A673 (cell line): ENCODE measurements at regions of chr7 and their contacts with region 1.

Region 1: DNA sequence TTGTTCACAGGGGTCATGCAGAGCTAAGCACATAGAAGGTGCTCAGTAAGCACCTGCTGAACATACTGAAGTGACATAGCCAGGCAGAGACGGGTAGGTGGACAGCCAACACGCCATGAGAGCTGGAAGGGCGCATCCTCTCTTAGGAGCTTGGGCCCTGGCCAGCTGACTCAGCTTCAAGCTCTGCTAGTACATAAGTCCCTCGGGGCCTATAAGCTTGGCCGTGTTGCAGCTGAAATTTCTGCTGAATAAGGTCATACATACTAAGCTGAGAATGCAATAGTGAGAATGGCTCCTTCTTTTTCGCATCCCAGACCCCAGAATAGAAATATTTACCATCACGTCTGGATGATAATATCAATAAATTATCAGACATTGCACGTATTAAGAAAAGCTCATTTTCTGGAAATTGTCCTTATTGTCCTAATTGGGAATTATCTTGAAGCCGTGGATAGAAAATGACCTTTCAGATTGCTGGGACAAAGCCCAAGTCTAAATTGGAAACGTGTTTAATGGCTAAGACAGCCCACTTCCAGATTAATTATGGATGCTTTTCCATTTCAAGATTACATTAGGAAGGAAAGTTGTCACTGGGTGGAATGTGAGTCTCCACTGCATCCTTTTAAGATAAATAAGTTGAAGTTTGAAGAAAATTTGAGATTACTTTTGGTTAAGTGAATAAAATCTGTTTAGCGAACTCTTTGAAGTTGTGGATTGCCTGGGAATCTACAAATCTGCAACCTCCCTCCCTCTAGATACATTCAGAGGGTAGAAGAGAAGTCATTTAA is 287.1 kb upstream of the C7orf33 start:
- DNase-seq: peak; percentile 97
- H3K4me3 ChIP-seq: no peak overlapping the region
- H3K27ac ChIP-seq: peak overlapping the region; percentile 29
- H3K4me1 ChIP-seq: peaks cover 27% of the 10 kb centered on the region
- H3K27me3 ChIP-seq: no peaks in the 10 kb centered on the region
- CTCF ChIP-seq: no peak

Region 2: DNA sequence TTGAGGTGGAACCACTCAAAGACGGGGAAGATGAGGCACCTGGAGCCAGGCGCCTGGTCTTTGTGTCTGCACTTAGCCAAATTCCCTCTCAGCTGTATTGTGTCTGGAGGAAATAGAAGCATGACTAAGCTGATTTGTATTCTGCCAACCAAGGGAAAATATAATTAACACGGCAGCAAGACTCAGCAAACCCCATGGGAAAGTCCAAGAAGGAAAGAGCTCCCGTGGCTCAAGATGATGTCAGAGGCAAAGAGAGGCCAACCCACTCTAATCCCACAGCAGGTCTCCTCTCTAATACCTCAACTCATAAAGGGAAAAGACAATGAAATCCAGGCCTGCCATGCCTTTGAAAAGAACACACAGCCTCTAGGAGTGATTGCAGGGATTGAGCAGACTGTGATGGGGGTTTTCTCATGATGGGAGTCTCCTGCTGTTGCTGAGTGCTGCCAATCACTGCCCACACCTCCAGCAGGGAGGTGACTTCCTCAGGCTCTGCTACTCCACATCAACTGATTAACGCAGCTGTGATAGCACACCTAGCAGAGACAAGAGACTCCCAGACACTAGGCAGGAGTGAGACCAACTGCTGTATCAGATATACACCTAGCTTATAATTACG is 31.6 kb after region 1 on chr7:
- CTCF ChIA-PET with region 1: interaction called, 3 read pairs
- POLR2A ChIA-PET with region 1: no interaction called
- intact Hi-C with region 1: loop called (anchors 5 kb)
- DNase-seq: peak; percentile 98
- H3K4me3 ChIP-seq: no peak overlapping the region
- H3K27ac ChIP-seq: peak overlapping the region; percentile 60
- H3K4me1 ChIP-seq: peaks cover 53% of the 10 kb centered on the region
- H3K27me3 ChIP-seq: no peaks in the 10 kb centered on the region
- CTCF ChIP-seq: no peak

Region 3: GRCh38 chr7:148856891-148857290 is 553.4 kb after region 1 on chr7:
- CTCF ChIA-PET with region 1: no interaction called
- POLR2A ChIA-PET with region 1: no interaction called
- intact Hi-C with region 1: no loop called
- DNase-seq: no peak
- H3K4me3 ChIP-seq: no peak overlapping the region
- H3K27ac ChIP-seq: no peak overlapping the region
- H3K4me1 ChIP-seq: peaks cover 49% of the 10 kb centered on the region
- H3K27me3 ChIP-seq: no peaks in the 10 kb centered on the region
- CTCF ChIP-seq: no peak